ENCODE measurements at regions of chr1 and their contacts with region 1.

Region 1: DNA sequence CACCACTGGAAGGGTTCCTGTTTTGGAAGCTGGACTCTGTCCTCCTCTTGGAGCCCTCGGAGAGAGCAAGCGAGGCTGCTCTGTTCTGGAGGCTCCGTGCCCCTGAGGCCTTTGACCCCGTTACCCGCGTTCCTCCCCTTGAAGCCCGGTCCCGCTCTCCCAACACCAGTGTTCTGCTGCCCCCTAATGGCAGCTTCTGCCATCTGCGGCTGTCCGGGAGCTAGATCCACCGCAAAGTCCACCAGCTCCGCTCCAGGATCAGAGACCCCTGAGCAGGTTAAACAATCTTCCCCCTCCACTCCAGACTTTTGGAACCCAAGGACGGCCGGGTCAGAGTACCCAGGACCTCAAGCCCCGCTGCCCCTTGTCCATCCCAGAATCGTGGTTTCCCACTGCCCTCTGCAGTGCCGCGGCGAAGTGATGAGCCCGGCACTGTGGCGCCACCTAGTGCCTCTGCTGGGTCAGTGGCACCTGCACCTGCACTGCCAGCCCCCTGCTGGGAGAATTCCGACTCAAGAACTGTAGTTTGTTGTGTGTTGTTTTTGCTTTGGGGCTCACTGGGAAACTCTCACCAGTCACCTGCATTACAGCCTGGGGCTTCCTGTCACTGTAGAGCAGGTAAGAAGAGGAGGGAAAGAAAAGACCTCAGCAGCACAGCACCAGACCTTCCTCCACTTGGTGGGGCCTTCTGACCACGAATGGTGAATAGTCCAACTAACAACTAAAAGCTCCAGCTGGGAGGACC is 63.5 kb upstream of the NFASC start:
- DNase-seq: peak; percentile 89
- H3K4me3 Mint-ChIP-seq: peak overlapping the region; percentile 78
- H3K27ac Mint-ChIP-seq: peak overlapping the region; percentile 3
- H3K4me1 Mint-ChIP-seq: peaks cover 18% of the 10 kb centered on the region
- H3K27me3 Mint-ChIP-seq: peaks cover 30% of the 10 kb centered on the region

Region 2: GRCh38 chr1:204446370-204447111 is 360.6 kb before region 1 on chr1:
- CTCF ChIA-PET with region 1: interaction called, 13 read pairs
- DNase-seq: peak; percentile 85
- H3K4me3 Mint-ChIP-seq: no peak overlapping the region
- H3K27ac Mint-ChIP-seq: peak overlapping the region; percentile 33
- H3K4me1 Mint-ChIP-seq: peaks cover 52% of the 10 kb centered on the region
- H3K27me3 Mint-ChIP-seq: no peaks in the 10 kb centered on the region

Region 3: GRCh38 chr1:204565617-204566582 is 241.2 kb before region 1 on chr1:
- CTCF ChIA-PET with region 1: interaction called, 148 read pairs
- DNase-seq: peak; percentile 73
- H3K4me3 Mint-ChIP-seq: no peak overlapping the region
- H3K27ac Mint-ChIP-seq: peak overlapping the region; percentile 89
- H3K4me1 Mint-ChIP-seq: peaks cover 75% of the 10 kb centered on the region
- H3K27me3 Mint-ChIP-seq: no peaks in the 10 kb centered on the region

Region 4: GRCh38 chr1:204746838-204747442 is 60.2 kb before region 1 on chr1:
- CTCF ChIA-PET with region 1: interaction called, 10 read pairs
- DNase-seq: peak; percentile 69
- H3K4me3 Mint-ChIP-seq: no peak overlapping the region
- H3K27ac Mint-ChIP-seq: no peak overlapping the region
- H3K4me1 Mint-ChIP-seq: no peaks in the 10 kb centered on the region
- H3K27me3 Mint-ChIP-seq: peaks cover 44% of the 10 kb centered on the region

Region 5: GRCh38 chr1:204819495-204819894 is 12.4 kb after region 1 on chr1:
- CTCF ChIA-PET with region 1: interaction called, 16 read pairs
- DNase-seq: no peak
- H3K4me3 Mint-ChIP-seq: no peak overlapping the region
- H3K27ac Mint-ChIP-seq: no peak overlapping the region
- H3K4me1 Mint-ChIP-seq: no peaks in the 10 kb centered on the region
- H3K27me3 Mint-ChIP-seq: peaks cover 33% of the 10 kb centered on the region

Region 6: DNA sequence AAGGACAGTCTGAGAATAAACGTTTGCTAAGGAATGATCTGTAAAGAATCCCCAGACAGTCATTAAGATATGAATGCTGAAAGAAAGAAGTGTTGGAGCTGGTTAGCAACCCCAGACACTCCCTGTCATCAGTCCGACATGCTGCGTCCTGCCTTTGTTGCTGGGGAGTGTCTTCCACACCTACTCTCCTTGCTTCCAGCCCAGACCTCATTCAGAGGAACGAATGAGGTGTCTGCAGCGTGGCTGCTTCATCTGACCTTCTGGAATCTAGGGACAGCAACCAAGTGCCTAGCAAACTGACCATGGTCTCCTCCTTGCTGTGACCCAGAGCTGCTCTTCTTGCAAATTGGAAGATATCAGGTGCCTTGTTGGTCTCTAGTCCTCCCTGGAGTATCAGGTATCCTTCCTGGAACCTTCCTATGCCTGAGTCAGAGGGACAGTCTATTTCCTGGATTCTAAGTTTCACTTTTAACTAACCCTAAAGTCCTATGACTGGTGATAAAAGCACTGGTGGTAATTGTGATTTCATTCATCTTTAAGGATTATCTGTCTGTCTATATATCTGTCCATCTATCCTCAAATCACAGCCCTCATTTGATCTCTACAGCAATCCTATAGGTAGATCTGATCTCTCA is 108.9 kb after region 1 on chr1:
- CTCF ChIA-PET with region 1: no interaction called
- DNase-seq: no peak
- H3K4me3 Mint-ChIP-seq: no peak overlapping the region
- H3K27ac Mint-ChIP-seq: no peak overlapping the region
- H3K4me1 Mint-ChIP-seq: no peaks in the 10 kb centered on the region
- H3K27me3 Mint-ChIP-seq: peaks cover 18% of the 10 kb centered on the region

Region 7: GRCh38 chr1:205013683-205014367 is 206.7 kb after region 1 on chr1:
- CTCF ChIA-PET with region 1: no interaction called
- DNase-seq: no peak
- H3K4me3 Mint-ChIP-seq: no peak overlapping the region
- H3K27ac Mint-ChIP-seq: no peak overlapping the region
- H3K4me1 Mint-ChIP-seq: no peaks in the 10 kb centered on the region
- H3K27me3 Mint-ChIP-seq: peaks cover 25% of the 10 kb centered on the region

Measured in activated naive CD4-positive, alpha-beta T cell treated with anti-CD3 and anti-CD28 coated beads, Interleukin-2, amount 10 ng/mL, durations not matched to agents 7 days and 5 days (primary cell).